CD8-positive, alpha-beta memory T cell (primary cell): ENCODE measurements at regions of chr5 and their contacts with region 1.

Region 1: DNA sequence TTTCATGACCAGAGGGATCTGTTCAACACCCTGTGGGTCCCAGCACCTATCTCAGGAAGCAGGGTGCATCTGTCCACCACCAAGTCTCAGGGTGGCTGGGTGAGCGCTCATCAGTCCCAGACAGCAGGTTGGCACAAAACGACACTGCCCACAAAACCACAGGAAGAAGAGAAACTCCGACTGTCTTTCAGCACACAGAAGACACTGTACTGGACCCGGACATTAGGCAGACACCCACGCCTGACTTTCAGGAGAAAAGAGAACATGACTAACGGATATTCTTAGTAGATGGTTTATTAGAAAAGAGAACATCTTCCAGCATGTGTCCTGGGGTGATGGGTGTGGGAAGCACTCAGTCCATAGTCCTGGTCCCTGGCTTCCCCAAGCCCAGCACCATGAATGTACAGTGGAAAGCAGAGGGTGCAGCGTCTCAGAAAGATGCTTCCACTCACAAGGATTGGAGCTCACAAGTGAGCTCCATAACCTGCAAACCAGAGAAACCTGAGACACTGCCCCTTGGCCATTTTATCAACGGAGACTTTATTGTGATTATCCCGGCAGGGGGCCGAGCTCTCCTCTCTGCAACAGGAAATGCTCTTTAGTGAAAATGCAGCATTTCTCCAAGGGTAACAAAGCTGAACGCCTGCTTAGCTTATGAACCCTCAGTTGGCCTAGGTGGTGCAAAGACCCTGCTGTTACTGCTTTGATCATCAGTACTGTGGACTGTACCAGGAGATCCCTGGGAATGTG is 35.8 kb upstream of the LCP2 start:
- DNase-seq: peak; percentile 47 to 85 (median 62)
- H3K4me3 ChIP-seq: peak overlapping the region; percentile 6
- H3K4me3 Mint-ChIP-seq: peak overlapping the region in 6 of 7 donors; percentile 35 to 85 (median 75)
- H3K27ac ChIP-seq: peak overlapping the region; percentile 29
- H3K27ac Mint-ChIP-seq: no peak overlapping the region
- H3K4me1 ChIP-seq: peaks cover 97% of the 10 kb centered on the region
- H3K4me1 Mint-ChIP-seq: peaks cover 29 to 59% (median 30%) of the 10 kb centered on the region in 3 donors
- H3K27me3 ChIP-seq: no peaks in the 10 kb centered on the region
- H3K27me3 Mint-ChIP-seq: peaks cover 0 to 1% of the 10 kb centered on the region in 2 donors

Region 2: GRCh38 chr5:170056561-170057267 is 276.6 kb before region 1 on chr5:
- CTCF ChIA-PET with region 1: no interaction called
- POLR2A ChIA-PET with region 1: no interaction called
- DNase-seq: no peak
- H3K4me3 ChIP-seq: no peak overlapping the region
- H3K4me3 Mint-ChIP-seq: no peak overlapping the region
- H3K27ac ChIP-seq: no peak overlapping the region
- H3K27ac Mint-ChIP-seq: peak overlapping the region in 1 of 8 donors; percentile 72
- H3K4me1 ChIP-seq: no peaks in the 10 kb centered on the region
- H3K4me1 Mint-ChIP-seq: no peaks in the 10 kb centered on the region
- H3K27me3 ChIP-seq: no peaks in the 10 kb centered on the region
- H3K27me3 Mint-ChIP-seq: peaks cover 0 to 3% of the 10 kb centered on the region in 2 donors

Region 3: GRCh38 chr5:170262061-170263045 is 71.0 kb before region 1 on chr5:
- CTCF ChIA-PET with region 1: interaction called, 114 read pairs
- POLR2A ChIA-PET with region 1: interaction called, 15 read pairs
- DNase-seq: peak in 4 of 5 donors; percentile 40 to 88 (median 78)
- H3K4me3 ChIP-seq: no peak overlapping the region
- H3K4me3 Mint-ChIP-seq: peak overlapping the region; percentile 54 to 80 (median 76)
- H3K27ac ChIP-seq: no peak overlapping the region
- H3K27ac Mint-ChIP-seq: peak overlapping the region; percentile 91 to 98 (median 96)
- H3K4me1 ChIP-seq: peaks cover 76% of the 10 kb centered on the region
- H3K4me1 Mint-ChIP-seq: peaks cover 80 to 91% (median 91%) of the 10 kb centered on the region in 3 donors
- H3K27me3 ChIP-seq: no peaks in the 10 kb centered on the region
- H3K27me3 Mint-ChIP-seq: peaks cover 0 to 2% of the 10 kb centered on the region in 2 donors

Region 4: DNA sequence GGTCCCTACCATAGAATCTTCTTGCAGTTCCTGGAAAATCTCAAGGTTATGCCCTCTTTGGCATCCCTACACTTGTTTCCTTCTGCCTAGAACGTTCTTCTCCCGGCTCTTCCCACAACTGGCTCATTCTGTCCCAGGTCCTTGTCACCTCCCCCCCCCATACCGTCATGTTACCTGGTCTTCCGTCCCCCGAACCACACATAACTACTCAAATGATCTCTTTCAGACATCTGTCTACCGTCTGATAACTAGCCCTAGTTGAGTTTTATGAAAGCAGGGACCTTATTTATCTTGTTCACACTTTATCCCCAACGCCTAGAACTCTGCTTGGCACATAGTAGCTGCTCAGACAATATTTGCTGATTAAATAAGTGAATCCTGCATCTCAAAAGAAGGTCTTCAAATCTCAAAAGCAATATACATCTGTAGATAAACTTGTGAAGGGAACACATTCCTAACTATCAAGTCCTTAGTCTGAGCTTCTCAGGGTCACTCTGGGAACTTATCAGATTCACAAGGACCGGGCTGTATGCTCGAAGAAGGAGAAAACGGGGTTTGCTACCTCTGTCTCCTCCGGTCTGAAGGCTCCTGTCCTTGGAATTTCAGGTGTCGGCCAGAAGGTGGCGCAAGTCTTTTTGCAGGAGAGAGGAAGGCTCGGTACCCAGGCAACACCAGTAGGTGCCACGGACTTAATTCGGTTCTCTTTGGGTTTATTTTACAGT is 65.7 kb before region 1 on chr5:
- CTCF ChIA-PET with region 1: interaction called, 132 read pairs
- POLR2A ChIA-PET with region 1: interaction called, 27 read pairs
- DNase-seq: peak; percentile 72 to 87 (median 78)
- H3K4me3 ChIP-seq: peak overlapping the region; percentile 35
- H3K4me3 Mint-ChIP-seq: peak overlapping the region; percentile 64 to 83 (median 70)
- H3K27ac ChIP-seq: peak overlapping the region; percentile 2
- H3K27ac Mint-ChIP-seq: peak overlapping the region; percentile 93 to 99 (median 96)
- H3K4me1 ChIP-seq: peaks cover 90% of the 10 kb centered on the region
- H3K4me1 Mint-ChIP-seq: peaks cover 86 to 97% (median 93%) of the 10 kb centered on the region in 3 donors
- H3K27me3 ChIP-seq: no peaks in the 10 kb centered on the region
- H3K27me3 Mint-ChIP-seq: peaks cover 0 to 2% of the 10 kb centered on the region in 2 donors

Region 5: DNA sequence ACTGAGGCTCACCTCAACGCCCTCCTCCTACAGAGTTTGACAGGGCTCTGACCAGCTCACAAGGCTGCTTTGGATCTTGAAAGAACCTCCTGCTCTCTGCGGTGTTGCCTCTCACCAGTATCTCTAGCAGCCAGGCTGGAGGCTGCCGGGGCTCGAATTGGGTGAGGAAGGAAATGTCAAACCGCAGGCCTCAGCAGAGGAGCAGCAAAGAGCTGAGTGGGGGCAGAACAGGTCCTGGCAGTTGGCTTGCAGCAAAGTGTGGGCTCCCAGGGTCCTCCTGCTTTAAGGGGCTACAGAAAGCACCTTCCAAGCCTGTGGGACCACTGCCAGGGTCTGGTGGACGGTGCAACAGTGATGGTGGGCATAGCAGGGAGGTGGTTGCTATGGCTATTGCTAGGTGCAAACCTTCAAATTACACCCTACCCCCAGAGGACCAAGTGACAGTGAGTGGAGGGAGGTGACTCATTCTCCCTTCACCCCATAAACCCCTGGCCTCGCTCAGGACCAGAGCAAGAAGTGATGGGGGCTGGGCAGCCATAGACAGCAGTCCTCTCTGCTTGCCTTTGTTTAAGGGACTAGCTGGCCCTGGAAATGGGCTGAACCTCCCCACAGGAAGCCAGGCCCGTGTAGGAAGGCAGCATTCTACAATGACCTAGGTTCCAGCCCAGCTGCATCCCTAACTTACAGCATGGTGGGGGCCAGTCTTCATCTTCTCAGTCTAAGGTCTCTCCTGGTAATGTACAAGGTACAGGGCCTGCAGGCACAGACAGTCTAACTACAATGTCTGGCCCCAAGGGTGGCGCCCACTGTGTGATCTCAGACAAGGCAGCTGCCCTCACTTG is 54.5 kb before region 1 on chr5:
- CTCF ChIA-PET with region 1: interaction called, 132 read pairs
- POLR2A ChIA-PET with region 1: interaction called, 27 read pairs
- DNase-seq: peak; percentile 74 to 96 (median 93)
- H3K4me3 ChIP-seq: peak overlapping the region; percentile 55
- H3K4me3 Mint-ChIP-seq: peak overlapping the region; percentile 63 to 89 (median 85)
- H3K27ac ChIP-seq: peak overlapping the region; percentile 65
- H3K27ac Mint-ChIP-seq: peak overlapping the region; percentile 93 to 99 (median 97)
- H3K4me1 ChIP-seq: peaks cover 96% of the 10 kb centered on the region
- H3K4me1 Mint-ChIP-seq: peaks cover 94 to 99% (median 99%) of the 10 kb centered on the region in 3 donors
- H3K27me3 ChIP-seq: no peaks in the 10 kb centered on the region
- H3K27me3 Mint-ChIP-seq: peaks cover 0 to 1% of the 10 kb centered on the region in 2 donors

Region 6: DNA sequence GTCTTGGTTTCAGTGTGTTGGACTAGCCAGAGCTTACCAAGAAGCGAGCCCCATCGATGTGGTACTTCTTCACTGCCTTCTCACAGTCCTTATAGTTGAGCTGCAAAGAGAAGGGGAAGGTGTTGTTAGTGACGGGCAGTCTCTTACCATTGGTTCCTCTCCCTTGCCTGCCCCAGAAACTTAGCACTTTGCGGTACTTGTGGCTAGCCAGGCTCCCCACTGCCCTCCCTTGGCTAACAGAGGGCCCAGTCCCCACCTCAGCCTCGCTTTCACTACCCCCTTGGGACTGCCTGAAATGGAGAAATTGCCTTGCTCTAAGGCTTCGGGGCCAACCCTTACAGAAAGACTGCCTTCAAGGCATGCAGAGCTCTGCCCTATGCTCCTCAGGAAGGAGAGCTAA is 40.1 kb before region 1 on chr5:
- CTCF ChIA-PET with region 1: interaction called, 93 read pairs
- POLR2A ChIA-PET with region 1: interaction called, 67 read pairs
- DNase-seq: peak in 4 of 5 donors; percentile 49 to 78 (median 70)
- H3K4me3 ChIP-seq: peak overlapping the region; percentile 100
- H3K4me3 Mint-ChIP-seq: peak overlapping the region; percentile 98 to 100 (median 99)
- H3K27ac ChIP-seq: peak overlapping the region; percentile 19
- H3K27ac Mint-ChIP-seq: peak overlapping the region; percentile 93 to 99 (median 96)
- H3K4me1 ChIP-seq: peaks cover 70% of the 10 kb centered on the region
- H3K4me1 Mint-ChIP-seq: peaks cover 66 to 77% (median 72%) of the 10 kb centered on the region in 3 donors
- H3K27me3 ChIP-seq: no peaks in the 10 kb centered on the region
- H3K27me3 Mint-ChIP-seq: no peaks in the 10 kb centered on the region

Region 7: DNA sequence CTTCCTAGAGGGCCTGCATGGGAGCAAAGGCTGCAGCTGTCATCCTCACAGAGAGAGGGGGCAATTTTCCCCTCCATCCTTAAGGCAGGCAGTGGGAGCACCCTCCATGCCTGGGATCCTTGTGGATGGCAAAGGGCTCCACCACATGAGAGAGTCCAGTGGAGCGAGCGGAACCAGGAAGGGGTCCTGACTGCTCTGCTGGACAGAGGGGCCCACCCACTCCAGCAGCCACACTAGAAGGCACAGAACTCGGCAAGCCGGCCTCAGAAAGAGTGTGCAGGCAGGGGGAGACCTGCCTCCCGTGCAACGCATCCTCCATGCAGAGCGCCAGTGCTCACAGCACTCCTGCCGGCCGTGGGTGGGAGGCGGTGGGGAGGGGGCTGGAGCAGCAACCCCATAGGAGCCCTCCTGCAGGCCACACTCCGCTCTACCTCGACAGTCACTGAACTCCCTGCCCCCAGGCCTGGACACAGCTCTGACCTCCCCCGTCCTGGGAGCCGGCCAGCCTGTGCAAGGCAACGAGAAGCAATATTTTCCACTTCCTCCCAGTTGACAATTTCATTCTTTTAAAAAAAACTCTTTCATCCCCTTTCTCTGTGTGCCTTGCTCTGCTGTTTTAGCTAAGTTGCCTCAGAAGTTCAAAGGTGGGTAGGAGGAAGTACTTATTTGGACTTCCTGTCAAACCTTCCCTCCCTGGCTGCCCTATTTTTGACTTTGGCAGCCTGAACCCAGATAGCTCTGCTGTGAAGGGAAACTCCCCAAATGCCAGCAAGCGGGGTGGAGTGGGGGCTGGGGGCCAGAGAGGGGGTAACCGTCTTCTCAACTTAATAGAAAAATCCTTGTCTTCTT is 30.5 kb before region 1 on chr5:
- CTCF ChIA-PET with region 1: interaction called, 93 read pairs
- POLR2A ChIA-PET with region 1: interaction called, 67 read pairs
- DNase-seq: peak; percentile 65 to 86 (median 81)
- H3K4me3 ChIP-seq: peak overlapping the region; percentile 61
- H3K4me3 Mint-ChIP-seq: peak overlapping the region; percentile 78 to 94 (median 86)
- H3K27ac ChIP-seq: peak overlapping the region; percentile 40
- H3K27ac Mint-ChIP-seq: peak overlapping the region; percentile 89 to 100 (median 95)
- H3K4me1 ChIP-seq: peaks cover 68% of the 10 kb centered on the region
- H3K4me1 Mint-ChIP-seq: peaks cover 58 to 78% (median 73%) of the 10 kb centered on the region in 3 donors
- H3K27me3 ChIP-seq: no peaks in the 10 kb centered on the region
- H3K27me3 Mint-ChIP-seq: no peaks in the 10 kb centered on the region

Region 8: GRCh38 chr5:170312666-170313065 is 20.7 kb before region 1 on chr5:
- CTCF ChIA-PET with region 1: interaction called, 15 read pairs
- POLR2A ChIA-PET with region 1: interaction called, 7 read pairs
- DNase-seq: peak in 3 of 5 donors; percentile 36 to 71 (median 43)
- H3K4me3 ChIP-seq: peak overlapping the region; percentile 9
- H3K4me3 Mint-ChIP-seq: peak overlapping the region; percentile 8 to 77 (median 70)
- H3K27ac ChIP-seq: no peak overlapping the region
- H3K27ac Mint-ChIP-seq: peak overlapping the region; percentile 61 to 95 (median 87)
- H3K4me1 ChIP-seq: peaks cover 58% of the 10 kb centered on the region
- H3K4me1 Mint-ChIP-seq: peaks cover 33 to 58% (median 41%) of the 10 kb centered on the region in 3 donors
- H3K27me3 ChIP-seq: no peaks in the 10 kb centered on the region
- H3K27me3 Mint-ChIP-seq: no peaks in the 10 kb centered on the region

Region 9: DNA sequence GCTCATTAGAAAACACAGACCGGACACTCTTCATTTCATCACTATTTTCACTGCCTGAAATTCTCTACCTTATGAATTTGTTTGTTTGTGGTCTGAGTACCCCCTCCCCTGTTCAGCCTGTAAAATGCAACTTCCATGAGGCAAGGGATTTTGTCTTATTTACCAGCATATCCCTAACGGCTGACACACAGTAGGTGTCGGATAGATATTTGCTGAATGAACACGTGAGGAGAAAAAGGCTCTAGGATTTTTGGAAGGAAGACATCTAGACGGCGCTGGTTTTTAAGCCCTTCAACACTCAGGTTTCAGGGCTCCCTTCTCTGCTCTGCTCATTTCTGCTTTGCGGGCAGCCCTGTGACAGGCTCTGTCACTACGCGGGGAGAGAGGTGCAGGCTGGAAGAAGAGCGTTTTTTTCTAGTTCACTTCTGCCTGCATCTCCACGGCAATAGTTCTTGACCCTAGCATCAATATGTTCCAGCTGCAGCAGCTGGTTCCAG is 14.8 kb after region 1 on chr5:
- CTCF ChIA-PET with region 1: no interaction called
- POLR2A ChIA-PET with region 1: no interaction called
- DNase-seq: no peak
- H3K4me3 ChIP-seq: no peak overlapping the region
- H3K4me3 Mint-ChIP-seq: no peak overlapping the region
- H3K27ac ChIP-seq: no peak overlapping the region
- H3K27ac Mint-ChIP-seq: no peak overlapping the region
- H3K4me1 ChIP-seq: no peaks in the 10 kb centered on the region
- H3K4me1 Mint-ChIP-seq: no peaks in the 10 kb centered on the region
- H3K27me3 ChIP-seq: peaks cover 13% of the 10 kb centered on the region
- H3K27me3 Mint-ChIP-seq: peaks cover 23 to 59% of the 10 kb centered on the region in 2 donors

Region 10: GRCh38 chr5:170611446-170612090 is 278.2 kb after region 1 on chr5:
- CTCF ChIA-PET with region 1: no interaction called
- POLR2A ChIA-PET with region 1: no interaction called
- DNase-seq: no peak
- H3K4me3 ChIP-seq: no peak overlapping the region
- H3K4me3 Mint-ChIP-seq: no peak overlapping the region
- H3K27ac ChIP-seq: no peak overlapping the region
- H3K27ac Mint-ChIP-seq: no peak overlapping the region
- H3K4me1 ChIP-seq: no peaks in the 10 kb centered on the region
- H3K4me1 Mint-ChIP-seq: no peaks in the 10 kb centered on the region
- H3K27me3 ChIP-seq: no peaks in the 10 kb centered on the region
- H3K27me3 Mint-ChIP-seq: peaks cover 12 to 18% of the 10 kb centered on the region in 2 donors